Mucosa of descending colon (tissue), 3 donors: ENCODE measurements at regions of chrX and their contacts with region 1.

Region 1: DNA sequence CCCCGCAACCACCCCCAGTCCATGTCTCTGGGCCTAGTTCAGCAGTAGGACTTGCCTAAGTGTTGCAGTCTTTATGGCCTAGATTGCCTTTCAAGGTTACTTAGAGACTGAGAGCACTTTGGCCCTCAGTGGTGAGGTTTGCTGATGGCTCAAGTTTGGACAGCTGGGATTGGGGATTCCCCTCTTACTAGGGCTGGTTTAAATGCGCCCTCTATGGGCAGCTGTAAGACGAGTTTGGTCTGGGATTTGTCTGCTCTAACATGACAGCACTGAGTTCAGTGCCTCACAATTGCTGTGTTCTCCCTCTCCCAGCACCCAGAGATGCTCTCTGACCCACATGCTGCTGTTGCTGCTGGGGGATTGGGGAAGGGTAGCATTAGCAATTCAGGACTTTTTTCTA is 23.1 kb downstream of the DACH2 start:
- DNase-seq: peak in 1 of 3 donors; percentile 13
- ATAC-seq: peak; percentile 51
- H3K4me3 ChIP-seq: no peak overlapping the region
- H3K4me1 ChIP-seq: no peaks in the 10 kb centered on the region
- CTCF ChIP-seq: no peak

Region 2: DNA sequence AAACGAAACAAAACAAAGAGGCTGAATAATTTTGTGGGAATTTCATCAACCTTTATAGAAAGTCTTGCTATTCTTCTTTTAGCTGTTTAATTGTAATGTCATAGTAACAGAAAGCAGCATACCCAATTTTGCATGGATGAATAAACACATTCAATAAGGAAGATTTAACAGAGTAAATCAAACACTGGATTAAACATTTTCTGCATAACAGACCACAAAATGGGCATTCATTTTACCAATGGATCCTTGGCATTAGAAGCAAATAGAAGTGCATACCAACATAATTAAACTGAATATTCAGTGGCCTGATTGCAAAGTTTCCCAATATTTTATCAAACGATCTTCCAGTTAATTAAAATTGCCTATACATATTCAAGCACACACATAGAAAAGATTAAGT is 119.6 kb before region 1 on chrX:
- intact Hi-C with region 1: no loop called
- DNase-seq: no peak
- ATAC-seq: no peak
- H3K4me3 ChIP-seq: no peak overlapping the region
- H3K4me1 ChIP-seq: no peaks in the 10 kb centered on the region
- CTCF ChIP-seq: no peak

Region 3: GRCh38 chrX:86215260-86215659 is 43.9 kb after region 1 on chrX:
- intact Hi-C with region 1: no loop called
- DNase-seq: no peak
- ATAC-seq: no peak
- H3K4me3 ChIP-seq: no peak overlapping the region
- H3K4me1 ChIP-seq: no peaks in the 10 kb centered on the region
- CTCF ChIP-seq: no peak

Region 4: DNA sequence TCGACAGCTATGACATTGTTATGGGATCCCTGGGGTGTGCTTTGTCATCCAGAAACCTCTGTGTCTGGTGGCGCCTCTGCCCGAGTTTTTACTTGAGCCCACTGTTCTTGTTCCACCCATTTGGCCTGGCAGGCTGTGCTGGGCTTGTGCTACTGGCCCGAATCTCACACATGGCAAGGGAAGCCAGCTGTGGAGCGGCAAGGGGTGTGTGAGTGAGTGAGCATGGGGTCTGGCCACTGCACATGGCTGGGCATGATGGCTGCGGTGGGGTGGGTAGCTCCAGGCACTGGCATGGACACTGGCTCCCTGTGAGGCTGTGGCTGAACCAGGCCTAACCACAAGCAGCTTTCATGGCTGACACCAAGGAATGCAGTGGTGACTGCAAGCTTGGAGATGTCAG is 66.1 kb after region 1 on chrX:
- intact Hi-C with region 1: loop called in 1 of 2 experiments (anchors 10 kb)
- DNase-seq: peak in 1 of 3 donors; percentile 36
- ATAC-seq: no peak
- H3K4me3 ChIP-seq: no peak overlapping the region
- H3K4me1 ChIP-seq: no peaks in the 10 kb centered on the region
- CTCF ChIP-seq: no peak